ENCODE measurements at regions of chr21 and their contacts with region 1.

Region 1: DNA sequence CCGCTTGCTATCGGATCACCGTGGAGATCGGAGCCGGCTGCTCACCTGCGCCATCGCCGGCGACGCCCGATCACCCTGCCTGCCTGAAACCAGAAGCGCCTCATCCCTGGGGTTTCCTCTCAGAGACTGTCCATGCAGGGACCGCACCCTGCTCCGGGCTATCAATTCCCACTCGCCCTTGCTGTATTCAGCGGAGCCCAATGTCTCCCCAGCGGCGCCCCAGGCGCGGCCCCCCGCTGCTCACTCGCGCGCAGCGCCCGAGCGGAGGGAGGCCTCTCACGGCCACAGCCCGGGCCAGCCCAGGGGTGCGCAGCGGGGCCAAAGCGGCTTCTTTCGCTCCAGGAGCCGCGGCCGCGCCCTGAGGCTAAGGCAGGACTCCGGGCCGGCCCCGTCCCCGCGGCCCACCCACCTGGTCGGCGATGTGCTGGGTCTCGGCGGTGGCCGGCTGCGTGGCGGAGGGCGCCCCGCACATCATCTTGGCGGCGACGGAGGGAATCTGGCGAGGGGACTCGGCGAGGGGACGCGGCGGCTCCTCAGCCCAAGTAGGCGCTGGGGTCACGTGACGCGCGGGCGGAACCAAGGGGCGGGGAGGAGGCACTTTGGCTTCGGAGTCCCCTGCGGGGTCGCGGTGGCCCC is at the start of gene CSTB:
- DNase-seq: peak; percentile 88 to 93
- ATAC-seq: peak; percentile 82 to 88 (median 84)
- H3K4me3 ChIP-seq: peak within 1 kb of the TSS; percentile 83
- H3K27ac ChIP-seq: peak within 1 kb of the TSS; percentile 86
- H3K4me1 ChIP-seq: peaks cover 7% of the 10 kb centered on the region
- H3K27me3 ChIP-seq: no peaks in the 10 kb centered on the region
- CTCF ChIP-seq: no peak
- total RNA-seq, gene CSTB: 16.0 to 24.8 (median 20.7) TPM

Region 2: GRCh38 chr21:43718872-43719747 is 56.8 kb before region 1 on chr21 and contains the start of gene PDXK:
- intact Hi-C with region 1: loop called in 1 of 2 experiments (anchors 5 kb)
- DNase-seq: peak; percentile 87 to 91
- ATAC-seq: peak; percentile 91 to 93 (median 92)
- H3K4me3 ChIP-seq: peak within 1 kb of the TSS; percentile 85
- H3K27ac ChIP-seq: peak within 1 kb of the TSS; percentile 86
- H3K4me1 ChIP-seq: peaks cover 16% of the 10 kb centered on the region
- H3K27me3 ChIP-seq: no peaks in the 10 kb centered on the region
- CTCF ChIP-seq: no peak
- total RNA-seq, gene PDXK: 28.8 to 43.2 (median 38.5) TPM

Measured in psoas muscle (tissue), 8 donors.